Activated T-helper 1 cell treated with anti-CD3 and anti-CD28 coated beads, Interleukin-12 subunit alpha, Interleukin-12 subunit beta, Interleukin-2, Interleukin-4 antibody, amounts not matched to agents 30 ng/mL and 10 ng/mL and 1 ng/mL, durations not matched to agents 14 hours and 24 hours and 36 hours (primary cell): ENCODE measurements at regions of chr2 and their contacts with region 1.

Region 1: DNA sequence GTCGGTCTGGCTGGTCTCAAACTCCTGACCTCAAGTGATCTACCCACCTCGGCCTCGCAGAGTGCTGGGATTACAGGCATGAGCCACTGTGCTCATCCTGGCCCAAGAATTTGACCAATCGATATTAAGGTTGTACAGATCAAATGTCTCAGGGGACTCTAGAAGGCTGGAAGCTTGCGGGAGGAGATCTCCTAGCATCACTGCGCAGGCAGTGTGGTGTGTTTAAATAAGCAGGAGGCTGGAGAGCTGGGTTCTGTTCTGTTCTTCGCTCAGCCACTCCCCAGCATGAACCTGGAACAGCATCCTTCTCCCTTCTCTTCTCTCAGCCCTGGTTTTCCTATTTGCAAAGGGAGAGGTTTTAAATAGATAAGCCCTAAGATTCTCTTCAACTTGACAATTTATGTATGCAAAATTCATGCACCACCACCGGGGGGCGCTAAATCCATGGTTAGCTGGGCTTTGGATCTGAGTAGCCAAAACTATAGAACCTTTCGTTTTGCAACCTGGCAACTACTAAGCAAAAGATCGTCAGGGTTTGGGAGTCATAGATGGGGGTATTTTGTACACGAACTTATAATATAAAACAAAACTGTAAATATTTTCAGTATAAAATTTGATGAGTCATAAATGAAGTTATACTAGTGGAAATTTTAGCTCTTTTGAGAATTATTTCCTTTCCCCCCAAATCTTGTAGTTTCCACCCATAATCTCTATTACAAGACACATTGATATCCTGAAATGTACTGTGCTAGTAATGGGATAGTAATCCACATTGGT is 60.6 kb downstream of the SLC16A14 start:
- DNase-seq: peak; percentile 66
- H3K4me3 Mint-ChIP-seq: no peak overlapping the region
- H3K27ac Mint-ChIP-seq: no peak overlapping the region
- H3K4me1 Mint-ChIP-seq: peaks cover 11% of the 10 kb centered on the region
- H3K27me3 Mint-ChIP-seq: no peaks in the 10 kb centered on the region

Region 2: GRCh38 chr2:229800997-229801754 is 206.9 kb before region 1 on chr2:
- intact Hi-C with region 1: loop called (anchors 10 kb)
- DNase-seq: peak; percentile 50
- H3K4me3 Mint-ChIP-seq: no peak overlapping the region
- H3K27ac Mint-ChIP-seq: no peak overlapping the region
- H3K4me1 Mint-ChIP-seq: no peaks in the 10 kb centered on the region
- H3K27me3 Mint-ChIP-seq: no peaks in the 10 kb centered on the region